GM12878 (cell line): ENCODE measurements at regions of chr14 and their contacts with region 1.

Region 1: GRCh38 chr14:102891556-102891955 is 30.9 kb upstream of the AMN start:
- DNase-seq: no peak
- ATAC-seq: no peak
- H3K4me3 ChIP-seq: no peak overlapping the region
- H3K27ac ChIP-seq: no peak overlapping the region
- H3K4me1 ChIP-seq: peaks cover 7% of the 10 kb centered on the region
- H3K27me3 ChIP-seq: no peaks in the 10 kb centered on the region
- CTCF ChIP-seq: no peak
- EP300 ChIP-seq: no peak
- POLR2A ChIP-seq: no peak
- RAD21 ChIP-seq: no peak

Region 2: GRCh38 chr14:102878174-102878969 is 13.2 kb before region 1 on chr14:
- CTCF ChIA-PET with region 1: interaction called, 12 read pairs
- POLR2A ChIA-PET with region 1: no interaction called
- RAD21 ChIA-PET with region 1: no interaction called
- SMC1A ChIA-PET with region 1: interaction called, 3 read pairs
- in situ Hi-C with region 1: no loop called
- intact Hi-C with region 1: no loop called
- DNase-seq: no peak
- ATAC-seq: peak; percentile 74
- H3K4me3 ChIP-seq: no peak overlapping the region
- H3K27ac ChIP-seq: no peak overlapping the region
- H3K4me1 ChIP-seq: no peaks in the 10 kb centered on the region
- H3K27me3 ChIP-seq: no peaks in the 10 kb centered on the region
- CTCF ChIP-seq: peak; percentile 6 to 19 (median 14); a peak in 3 of 6 replicates
- EP300 ChIP-seq: no peak
- POLR2A ChIP-seq: peak; percentile 64
- RAD21 ChIP-seq: no peak

Region 3: DNA sequence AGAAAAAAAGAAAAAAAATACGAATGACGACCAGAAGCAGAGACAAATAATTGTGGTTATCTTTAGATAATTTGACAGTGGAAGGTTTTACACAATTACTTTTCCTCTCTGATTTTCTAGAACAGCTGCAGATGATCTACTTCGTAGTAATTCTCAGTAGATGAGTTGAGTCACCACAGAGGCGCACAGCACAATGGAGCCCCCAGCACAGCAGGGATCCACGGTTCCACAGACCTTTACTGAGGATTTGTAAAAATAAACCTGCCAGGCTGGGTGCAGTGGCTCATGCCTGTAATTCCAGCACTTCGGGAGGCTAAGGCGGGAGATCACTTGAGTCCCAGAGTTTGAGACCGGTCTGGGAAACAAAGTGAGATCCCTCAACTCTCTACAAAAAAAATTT is 60.2 kb after region 1 on chr14:
- CTCF ChIA-PET with region 1: no interaction called
- POLR2A ChIA-PET with region 1: no interaction called
- RAD21 ChIA-PET with region 1: no interaction called
- SMC1A ChIA-PET with region 1: no interaction called
- in situ Hi-C with region 1: no loop called
- intact Hi-C with region 1: no loop called
- DNase-seq: no peak
- ATAC-seq: no peak
- H3K4me3 ChIP-seq: no peak overlapping the region
- H3K27ac ChIP-seq: no peak overlapping the region
- H3K4me1 ChIP-seq: peaks cover 19% of the 10 kb centered on the region
- H3K27me3 ChIP-seq: no peaks in the 10 kb centered on the region
- CTCF ChIP-seq: no peak
- EP300 ChIP-seq: no peak
- POLR2A ChIP-seq: no peak
- RAD21 ChIP-seq: no peak